ENCODE measurements at regions of chr14 and their contacts with region 1.

Region 1: DNA sequence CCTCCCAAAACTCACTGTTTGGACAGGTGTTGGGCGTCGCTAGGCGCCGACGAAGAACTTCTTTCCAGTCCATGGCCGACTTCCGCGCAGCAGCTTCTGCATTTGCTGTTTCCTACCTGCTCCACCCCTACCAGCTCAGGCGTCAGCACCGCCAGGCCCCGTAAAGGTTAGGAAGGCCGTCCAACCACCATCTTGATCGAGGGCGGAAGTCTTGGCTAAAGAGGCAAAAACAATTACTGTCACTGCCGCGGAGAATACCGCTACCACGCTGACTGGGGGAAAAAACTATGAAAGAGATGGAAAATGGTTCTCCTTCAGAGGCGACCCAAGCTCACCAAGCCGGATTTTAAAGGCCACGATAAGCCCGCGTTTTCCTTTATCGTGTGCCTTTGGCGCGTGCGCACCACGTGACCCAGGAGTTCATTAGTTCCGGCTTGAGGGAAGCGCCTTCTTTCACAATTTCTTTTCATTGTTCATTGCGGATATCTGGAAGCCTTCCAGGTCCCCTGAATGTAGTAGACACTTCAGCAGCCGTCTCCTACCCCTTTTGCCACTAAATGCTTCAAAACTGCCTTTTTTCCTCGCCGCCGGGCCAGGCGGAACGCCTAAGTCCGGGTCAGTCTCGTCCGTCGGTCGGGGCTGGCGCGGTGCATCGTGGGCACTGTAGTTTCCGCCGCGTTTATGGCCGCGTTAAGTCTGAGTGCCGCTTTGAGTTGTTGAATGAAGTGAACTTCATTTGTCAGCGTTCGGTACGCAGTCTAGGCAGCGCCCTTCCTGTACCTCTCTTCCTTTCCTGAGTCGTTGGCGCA is at the starts of genes PPP2R3C and PRORP:
- DNase-seq: peak; percentile 96
- ATAC-seq: peak; percentile 97
- total RNA-seq, gene PPP2R3C: 26.8 TPM
- total RNA-seq, gene PRORP: 22.0 TPM

Region 2: DNA sequence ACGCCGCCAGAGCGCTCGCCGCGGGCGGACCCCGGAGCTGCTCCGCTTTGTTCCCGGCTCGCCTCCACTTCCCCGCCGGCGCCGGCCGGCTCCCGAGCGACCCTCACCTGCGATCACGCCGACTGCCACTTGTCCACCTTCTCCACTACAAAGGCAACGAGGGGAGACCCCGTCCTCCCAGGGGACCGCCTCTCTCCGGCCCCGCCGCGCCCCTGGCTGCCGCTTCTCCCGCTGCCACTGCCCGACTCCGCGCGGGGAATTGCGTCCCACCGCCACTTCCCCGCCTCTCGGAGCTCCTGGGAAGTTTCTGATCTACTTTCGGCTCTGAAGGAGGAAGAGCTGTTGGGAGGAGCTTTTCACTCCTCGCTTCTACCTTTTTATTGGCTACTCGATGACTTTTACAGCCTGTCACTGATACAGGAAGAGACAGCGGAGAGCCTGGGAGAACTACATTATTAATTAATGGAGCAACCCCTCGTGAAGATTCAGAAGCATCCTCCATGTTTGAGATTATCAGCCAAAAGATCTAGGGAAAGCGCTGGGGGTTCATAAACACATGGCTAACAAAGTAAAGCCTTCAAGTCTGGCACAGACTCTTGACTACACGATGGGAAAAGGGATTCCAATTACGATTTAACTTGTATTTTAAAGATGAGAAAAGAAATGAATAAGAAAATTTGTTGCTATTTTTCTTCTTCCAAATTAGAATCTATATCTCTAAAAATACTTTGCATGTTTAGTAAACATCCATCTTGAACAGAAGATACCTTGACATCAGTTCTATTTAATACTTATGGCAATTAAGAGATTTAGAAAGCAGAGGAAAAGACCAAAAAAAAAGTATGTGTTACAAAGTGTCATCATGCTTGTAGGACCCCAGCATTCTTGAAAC is 246.8 kb before region 1 on chr14 and contains the start of gene BAZ1A:
- intact Hi-C with region 1: loop called (anchors 10 kb)
- DNase-seq: peak; percentile 80
- ATAC-seq: peak; percentile 74
- total RNA-seq, gene BAZ1A: 5.6 TPM

Region 3: DNA sequence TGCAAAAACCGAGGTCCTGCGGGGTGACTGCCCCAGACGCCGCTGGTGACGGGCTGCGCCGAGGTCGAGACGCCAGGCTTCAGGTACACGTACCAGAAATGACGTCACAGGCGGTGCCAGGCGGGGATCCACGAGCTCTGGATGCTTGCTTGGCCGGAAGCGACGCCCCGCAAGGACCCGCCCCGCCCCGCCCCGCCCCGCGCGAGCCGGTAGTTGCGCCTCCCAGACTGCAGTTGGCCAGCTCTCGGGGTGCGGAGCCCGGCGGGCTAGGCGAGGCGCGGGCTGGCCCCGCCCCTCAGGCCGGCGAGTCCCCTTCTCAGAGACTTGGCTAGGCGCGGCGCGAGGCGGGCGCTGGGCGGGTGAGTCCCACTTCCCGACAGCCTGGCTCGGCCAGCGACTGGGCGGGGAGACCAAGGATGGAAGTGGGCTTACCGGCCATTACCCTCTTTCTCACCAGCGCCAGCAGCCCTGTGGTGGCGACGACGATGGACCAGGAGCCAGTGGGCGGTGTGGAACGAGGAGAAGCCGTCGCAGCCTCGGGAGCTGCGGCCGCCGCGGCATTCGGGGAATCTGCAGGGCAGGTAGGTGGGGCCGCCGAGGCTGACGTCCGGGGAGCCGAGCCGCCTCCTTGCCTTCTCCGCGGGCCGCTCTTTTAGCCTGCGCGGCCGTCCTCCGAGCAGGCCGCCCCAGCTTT is 75.9 kb before region 1 on chr14 and contains the start of gene FAM177A1:
- intact Hi-C with region 1: loop called (anchors 2 kb)
- DNase-seq: peak; percentile 100
- ATAC-seq: peak; percentile 100
- total RNA-seq, gene FAM177A1: 66.5 TPM

Region 4: DNA sequence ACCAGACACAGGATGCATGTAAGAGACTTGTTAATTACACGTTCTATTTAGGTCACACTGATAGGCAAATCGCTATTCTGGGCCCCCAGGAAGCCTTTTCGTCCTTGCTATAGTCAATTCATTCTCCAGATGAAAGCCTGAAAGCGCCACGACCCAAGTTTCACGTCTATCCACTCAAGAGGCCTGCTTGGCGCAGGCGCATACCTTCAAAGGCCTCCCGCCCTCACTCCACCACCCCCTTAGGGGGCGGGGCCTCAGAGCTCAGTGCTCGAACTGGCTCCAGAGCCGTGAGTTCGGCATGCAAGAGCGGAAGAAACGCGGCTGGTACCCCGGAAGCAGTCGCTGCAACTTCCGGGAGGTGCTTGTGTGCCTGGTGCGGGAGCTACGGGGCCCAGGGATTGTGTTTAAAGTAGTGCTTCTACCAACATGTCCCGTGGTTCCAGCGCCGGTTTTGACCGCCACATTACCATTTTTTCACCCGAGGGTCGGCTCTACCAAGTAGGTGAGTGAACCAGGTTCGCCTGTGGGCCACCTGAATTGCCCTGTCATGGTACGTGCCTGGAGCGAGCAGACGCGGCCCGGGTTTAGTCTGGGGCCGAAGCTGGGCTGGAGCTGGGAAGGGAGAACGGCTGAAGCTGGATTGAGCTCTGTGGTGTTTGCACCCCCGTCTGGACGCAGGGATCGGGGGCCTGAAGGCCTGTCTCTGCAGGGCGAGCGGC is 170.1 kb after region 1 on chr14 and contains the start of gene PSMA6:
- intact Hi-C with region 1: loop called (anchors 5 kb)
- DNase-seq: peak; percentile 100
- ATAC-seq: peak; percentile 100
- total RNA-seq, gene PSMA6: 195 TPM

Region 5: DNA sequence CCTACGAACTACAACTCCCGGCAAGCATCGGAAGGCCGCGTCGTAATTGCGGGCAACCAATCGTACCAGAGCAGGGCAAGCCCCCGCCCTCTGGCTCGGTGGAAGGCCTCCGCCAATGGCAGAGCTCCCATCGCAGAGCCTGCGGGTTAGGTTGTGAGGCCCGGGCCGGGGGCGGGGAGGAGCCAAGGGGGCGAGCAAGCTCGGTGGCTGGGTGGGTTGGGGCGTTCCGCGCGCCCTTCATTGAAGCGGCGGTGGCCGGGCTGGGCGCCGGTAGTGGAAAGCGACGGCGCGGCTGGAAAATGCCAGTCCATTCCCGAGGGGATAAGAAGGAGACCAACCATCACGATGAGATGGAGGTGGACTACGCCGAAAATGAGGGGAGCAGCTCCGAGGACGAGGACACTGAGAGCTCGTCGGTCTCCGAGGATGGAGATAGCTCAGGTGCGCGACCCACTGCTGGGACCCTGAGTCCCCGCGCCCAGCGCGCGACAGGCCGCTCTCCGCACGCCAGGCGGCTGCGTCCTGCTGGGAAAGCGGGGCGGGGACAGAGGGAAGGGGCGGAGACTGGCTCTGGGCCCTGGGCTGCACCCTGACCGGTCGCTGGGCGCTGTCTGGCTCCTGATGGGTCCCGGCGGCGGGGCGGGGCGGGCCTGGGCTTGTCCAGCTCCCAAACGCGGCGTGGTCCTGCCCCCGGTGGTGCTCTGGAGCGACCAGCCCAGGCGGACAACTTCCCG is 704.3 kb after region 1 on chr14 and contains the start of gene BRMS1L:
- intact Hi-C with region 1: loop called (anchors 10 kb)
- DNase-seq: peak; percentile 99
- ATAC-seq: peak; percentile 99
- total RNA-seq, gene BRMS1L: 11.7 TPM

Measured in Right ventricle myocardium inferior (tissue), 1 donor.